Mucosa of descending colon (tissue), 3 donors: ENCODE measurements at regions of chr12 and their contacts with region 1.

Region 1: DNA sequence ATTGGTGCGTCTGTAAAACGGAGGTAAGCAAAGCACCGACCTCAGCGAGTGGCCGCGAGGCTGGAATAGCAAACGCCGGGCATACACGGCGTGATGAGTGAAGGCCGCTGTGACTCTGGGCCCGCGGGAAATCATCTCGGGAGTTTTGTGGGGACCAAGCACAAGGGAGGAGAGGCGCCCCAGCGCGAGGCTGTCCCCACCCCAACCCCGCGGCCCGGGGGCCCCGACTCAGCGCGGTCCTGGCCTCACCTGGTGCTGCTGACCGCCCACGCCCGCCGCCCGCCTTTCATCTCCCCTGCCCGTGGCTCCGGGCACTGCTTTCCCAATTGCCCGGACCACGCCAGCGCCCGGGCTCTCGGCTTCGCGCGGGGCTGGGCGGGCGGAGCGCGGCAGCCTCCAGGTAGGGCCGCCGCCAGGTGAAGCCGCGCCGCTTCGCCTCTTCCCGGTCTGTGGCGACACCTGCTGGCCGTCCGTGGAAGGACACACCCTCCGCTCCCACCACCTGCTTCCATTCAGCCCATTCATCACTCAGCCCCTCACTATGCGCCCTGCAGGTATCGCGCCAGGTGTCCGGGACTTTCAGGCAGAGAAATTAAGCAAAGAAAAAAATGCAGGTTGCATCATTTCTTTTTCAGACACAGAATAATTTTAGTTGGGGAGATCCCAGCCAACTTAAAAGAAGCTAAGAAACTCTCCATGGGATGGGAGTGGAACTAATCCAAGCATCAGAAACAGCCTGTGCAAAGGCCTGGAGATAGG is 360.4 kb downstream of the MED13L start:
- DNase-seq: peak; percentile 67 to 85 (median 80)
- ATAC-seq: peak; percentile 100
- H3K4me3 ChIP-seq: no peak overlapping the region
- H3K4me1 ChIP-seq: peaks cover 5% of the 10 kb centered on the region
- CTCF ChIP-seq: peak; percentile 84

Region 2: GRCh38 chr12:113980537-113981337 is 1936.4 kb before region 1 on chr12:
- intact Hi-C with region 1: loop called in 1 of 2 experiments (anchors 10 kb)
- DNase-seq: peak in 2 of 3 donors; percentile 12 to 41
- ATAC-seq: peak; percentile 85
- H3K4me3 ChIP-seq: no peak overlapping the region
- H3K4me1 ChIP-seq: no peaks in the 10 kb centered on the region
- CTCF ChIP-seq: peak; percentile 76

Region 3: DNA sequence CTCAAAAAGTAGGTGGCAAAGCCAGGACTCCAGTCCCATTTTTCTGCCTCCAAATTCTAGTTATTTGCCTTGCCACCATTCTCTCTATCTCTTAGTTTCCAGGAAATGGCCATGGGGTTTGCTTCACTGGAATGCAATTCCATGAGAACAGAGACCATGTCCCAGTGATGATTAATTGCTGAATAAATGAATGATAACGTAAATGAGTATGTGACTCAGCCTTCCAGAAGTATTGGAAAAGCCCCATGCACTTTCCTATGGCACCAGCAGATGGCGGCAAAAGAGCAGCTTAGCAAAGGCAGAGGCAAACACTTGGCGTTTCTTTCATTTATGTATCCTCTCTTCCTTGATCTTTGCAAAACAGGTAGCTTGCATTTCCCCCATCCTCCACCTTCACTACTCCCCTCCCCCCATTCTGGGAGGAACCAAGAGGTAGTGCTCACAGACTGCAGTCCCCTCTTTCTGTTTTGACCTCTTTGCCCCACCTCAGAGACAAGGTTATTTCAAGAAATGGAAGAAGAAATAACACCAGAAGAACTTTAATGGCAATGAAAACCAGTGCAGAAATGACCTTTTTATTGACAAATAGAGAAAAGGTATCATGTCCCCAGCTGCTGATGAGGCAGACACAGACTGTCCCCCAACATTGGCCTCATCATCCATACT is 1254.4 kb before region 1 on chr12:
- intact Hi-C with region 1: loop called (anchors 5 kb)
- DNase-seq: peak in 2 of 3 donors; percentile 83 to 91
- ATAC-seq: peak; percentile 79
- H3K4me3 ChIP-seq: no peak overlapping the region
- H3K4me1 ChIP-seq: peaks cover 3% of the 10 kb centered on the region
- CTCF ChIP-seq: peak; percentile 81